Activated CD4-positive, alpha-beta T cell treated with anti-CD3 and anti-CD28 coated beads for 36 hours (primary cell): ENCODE measurements at regions of chr21 and their contacts with region 1.

Region 1: GRCh38 chr21:45643021-45643980 is at the start of gene PCBP3:
- DNase-seq: peak; percentile 99
- ATAC-seq: peak; percentile 84
- H3K4me3 Mint-ChIP-seq: peak within 1 kb of the TSS; percentile 78
- H3K27ac Mint-ChIP-seq: peak within 1 kb of the TSS; percentile 70
- H3K4me1 Mint-ChIP-seq: peaks cover 47% of the 10 kb centered on the region
- H3K27me3 Mint-ChIP-seq: peaks cover 4% of the 10 kb centered on the region
- total RNA-seq, gene PCBP3: 12.2 to 13.2 TPM

Region 2: GRCh38 chr21:44444286-44444931 is 1198.9 kb before region 1 on chr21:
- CTCF ChIA-PET with region 1: no interaction called
- POLR2A ChIA-PET with region 1: no interaction called
- intact Hi-C with region 1: no loop called
- DNase-seq: peak; percentile 36
- ATAC-seq: peak; percentile 51
- H3K4me3 Mint-ChIP-seq: no peak overlapping the region
- H3K27ac Mint-ChIP-seq: no peak overlapping the region
- H3K4me1 Mint-ChIP-seq: no peaks in the 10 kb centered on the region
- H3K27me3 Mint-ChIP-seq: peaks cover 3% of the 10 kb centered on the region

Region 3: GRCh38 chr21:44817506-44817880 is 825.8 kb before region 1 on chr21:
- CTCF ChIA-PET with region 1: no interaction called
- POLR2A ChIA-PET with region 1: no interaction called
- intact Hi-C with region 1: loop called in 1 of 2 experiments (anchors 1 kb)
- DNase-seq: peak; percentile 97
- ATAC-seq: peak; percentile 92
- H3K4me3 Mint-ChIP-seq: peak overlapping the region; percentile 69
- H3K27ac Mint-ChIP-seq: no peak overlapping the region
- H3K4me1 Mint-ChIP-seq: peaks cover 13% of the 10 kb centered on the region
- H3K27me3 Mint-ChIP-seq: no peaks in the 10 kb centered on the region

Region 4: GRCh38 chr21:45542242-45542666 is 101.0 kb before region 1 on chr21 and contains the start of gene SLC19A1:
- CTCF ChIA-PET with region 1: no interaction called
- POLR2A ChIA-PET with region 1: no interaction called
- intact Hi-C with region 1: loop called in 1 of 2 experiments (anchors 1 kb)
- DNase-seq: peak; percentile 86
- ATAC-seq: peak; percentile 86
- H3K4me3 Mint-ChIP-seq: peak within 1 kb of the TSS; percentile 80
- H3K27ac Mint-ChIP-seq: peak within 1 kb of the TSS; percentile 80
- H3K4me1 Mint-ChIP-seq: peaks cover 20% of the 10 kb centered on the region
- H3K27me3 Mint-ChIP-seq: no peaks in the 10 kb centered on the region
- total RNA-seq, gene SLC19A1: 46.1 to 50.0 TPM

Region 5: DNA sequence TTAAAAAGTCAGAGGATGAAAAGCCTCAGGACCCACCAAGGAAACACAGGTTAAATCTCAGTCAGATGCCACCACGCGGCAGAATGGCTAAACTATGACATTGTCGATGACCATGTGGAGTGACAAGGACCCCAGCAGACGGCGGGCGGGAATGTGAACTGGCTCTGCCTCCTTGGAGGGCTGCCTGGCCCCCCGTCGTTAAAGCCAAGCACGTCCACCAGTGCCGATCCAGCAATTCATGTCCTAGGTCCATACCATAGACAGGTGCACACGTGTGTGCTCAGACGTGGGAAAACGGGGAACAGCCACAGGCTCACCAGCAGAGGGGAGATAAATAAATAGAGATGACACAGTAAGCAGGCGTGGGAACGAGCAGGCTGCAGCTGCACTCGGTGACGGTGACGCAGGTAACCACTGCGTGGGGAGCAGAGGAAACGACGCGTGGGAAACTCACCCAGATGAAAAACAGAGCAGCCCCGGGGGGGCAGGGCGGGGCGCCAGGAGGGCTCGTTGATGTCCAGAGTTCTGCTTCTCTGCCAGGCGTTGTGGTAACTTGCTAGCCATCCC is 28.1 kb before region 1 on chr21:
- CTCF ChIA-PET with region 1: interaction called, 4 read pairs
- POLR2A ChIA-PET with region 1: no interaction called
- intact Hi-C with region 1: loop called in 1 of 2 experiments (anchors 1 kb)
- DNase-seq: peak; percentile 90
- ATAC-seq: peak; percentile 91
- H3K4me3 Mint-ChIP-seq: peak overlapping the region; percentile 75
- H3K27ac Mint-ChIP-seq: peak overlapping the region; percentile 85
- H3K4me1 Mint-ChIP-seq: peaks cover 38% of the 10 kb centered on the region
- H3K27me3 Mint-ChIP-seq: no peaks in the 10 kb centered on the region

Region 6: GRCh38 chr21:45887120-45887611 is 243.9 kb after region 1 on chr21:
- CTCF ChIA-PET with region 1: no interaction called
- POLR2A ChIA-PET with region 1: interaction called, 6 read pairs
- intact Hi-C with region 1: loop called in 1 of 2 experiments (anchors 5 kb)
- DNase-seq: no peak
- ATAC-seq: no peak
- H3K4me3 Mint-ChIP-seq: peak overlapping the region; percentile 21
- H3K27ac Mint-ChIP-seq: peak overlapping the region; percentile 68
- H3K4me1 Mint-ChIP-seq: peaks cover 86% of the 10 kb centered on the region
- H3K27me3 Mint-ChIP-seq: peaks cover 2% of the 10 kb centered on the region

Region 7: DNA sequence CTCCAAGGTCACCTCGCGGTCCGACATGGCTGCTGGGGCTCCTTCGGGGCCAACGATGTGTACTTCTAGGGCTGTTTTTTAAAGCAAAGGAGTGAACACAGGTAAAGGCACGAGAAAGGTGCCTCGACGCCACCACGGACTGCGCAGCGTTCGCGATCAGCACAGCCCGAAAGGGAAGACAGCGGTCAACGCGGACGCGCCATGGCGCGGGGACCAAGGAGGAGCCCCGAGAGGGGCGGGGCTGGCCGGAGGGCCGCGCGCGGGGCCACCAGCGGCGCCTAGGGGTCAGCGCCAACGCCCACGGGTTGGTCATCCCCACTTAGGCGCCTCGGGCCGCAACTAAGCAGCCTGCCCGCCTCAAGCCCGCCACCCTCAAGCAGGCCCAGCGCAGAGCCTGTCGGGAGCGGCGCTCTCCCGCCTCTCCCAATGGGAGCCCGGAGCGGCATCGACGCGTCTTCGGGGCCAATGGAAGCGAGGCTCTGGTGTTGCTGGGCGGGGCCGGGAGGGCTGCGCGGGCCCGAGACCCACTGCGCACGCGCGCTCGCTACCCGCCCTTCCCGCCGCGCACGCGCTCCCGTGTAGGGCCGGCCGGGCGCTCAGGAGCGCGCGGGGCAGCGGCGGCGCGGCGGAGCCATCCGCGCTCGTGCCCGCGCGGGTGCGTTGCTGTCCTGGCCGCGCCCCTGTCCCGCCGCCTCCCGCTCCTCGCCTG is 815.2 kb after region 1 on chr21 and contains the start of gene DIP2A:
- CTCF ChIA-PET with region 1: no interaction called
- POLR2A ChIA-PET with region 1: no interaction called
- intact Hi-C with region 1: loop called in 1 of 2 experiments (anchors 2 kb)
- DNase-seq: peak; percentile 96
- ATAC-seq: peak; percentile 98
- H3K4me3 Mint-ChIP-seq: peak within 1 kb of the TSS; percentile 91
- H3K27ac Mint-ChIP-seq: peak within 1 kb of the TSS; percentile 84
- H3K4me1 Mint-ChIP-seq: peaks cover 41% of the 10 kb centered on the region
- H3K27me3 Mint-ChIP-seq: no peaks in the 10 kb centered on the region
- total RNA-seq, gene DIP2A: 25.2 to 27.7 TPM

Region 8: DNA sequence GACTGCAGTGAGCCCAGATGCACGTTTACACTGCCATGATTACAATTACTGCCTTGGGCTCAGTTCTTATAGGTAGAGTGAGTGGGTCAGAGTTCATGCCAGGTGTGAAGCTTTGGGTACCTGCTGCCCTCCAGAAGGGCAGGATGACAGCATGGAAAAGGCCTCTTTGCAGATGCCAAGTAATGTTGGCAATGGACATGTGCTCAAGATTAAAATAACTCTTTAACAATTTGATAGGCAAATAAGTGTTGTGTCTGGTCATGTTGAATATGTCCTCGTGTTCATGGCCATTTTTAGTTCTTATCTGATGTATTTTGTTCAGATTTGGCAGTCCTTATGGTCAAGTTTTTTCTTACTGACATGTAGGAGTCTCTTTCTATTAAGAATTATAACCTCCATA is 926.8 kb after region 1 on chr21:
- CTCF ChIA-PET with region 1: no interaction called
- POLR2A ChIA-PET with region 1: no interaction called
- intact Hi-C with region 1: no loop called
- DNase-seq: no peak
- ATAC-seq: no peak
- H3K4me3 Mint-ChIP-seq: no peak overlapping the region
- H3K27ac Mint-ChIP-seq: no peak overlapping the region
- H3K4me1 Mint-ChIP-seq: peaks cover 21% of the 10 kb centered on the region
- H3K27me3 Mint-ChIP-seq: no peaks in the 10 kb centered on the region